Uterus (tissue), 4 donors: ENCODE measurements at regions of chr1 and their contacts with region 1.

Region 1: DNA sequence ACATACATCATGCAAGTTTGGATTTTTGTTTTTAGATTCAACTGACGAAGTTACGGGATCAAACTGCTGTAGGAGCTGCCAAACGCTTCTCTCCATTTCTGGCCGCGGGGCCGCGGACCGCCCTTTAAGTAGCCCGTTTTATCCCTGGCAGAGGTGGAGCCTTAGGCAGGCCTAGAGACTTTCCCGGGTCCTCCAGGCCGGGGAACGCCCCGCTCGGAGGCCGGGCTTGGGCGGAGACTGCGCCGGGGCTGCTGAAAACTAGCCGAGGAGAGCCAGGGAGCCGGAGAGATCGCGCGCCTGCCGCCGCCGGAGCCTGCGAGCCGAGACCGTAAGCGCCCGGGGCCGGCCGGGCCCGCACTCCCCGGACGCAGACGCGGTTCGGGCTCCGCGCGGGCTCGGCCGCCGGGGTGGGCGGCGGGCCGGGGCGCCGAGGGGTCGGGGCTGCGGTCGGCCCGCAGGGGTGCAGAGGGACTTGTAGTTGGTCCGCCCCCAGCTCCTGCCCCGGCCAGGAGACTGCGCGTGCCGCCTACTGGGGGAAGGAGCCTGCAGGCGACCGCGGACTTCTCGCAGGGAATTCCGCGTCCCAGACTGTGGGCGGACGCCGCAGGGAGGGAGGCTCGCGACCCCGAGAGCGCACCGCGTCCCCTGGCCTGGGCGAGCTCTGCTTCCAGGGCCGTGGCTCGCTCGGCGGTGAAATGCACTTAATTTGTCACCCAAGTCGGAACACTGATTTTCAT is at the start of gene EPHX1:
- DNase-seq: peak; percentile 89 to 92
- H3K4me3 ChIP-seq: peak within 1 kb of the TSS; percentile 75 to 76
- H3K27ac ChIP-seq: peak within 1 kb of the TSS; percentile 94 to 99
- H3K4me1 ChIP-seq: peaks cover 23 to 28% of the 10 kb centered on the region in 2 donors
- H3K27me3 ChIP-seq: no peaks in the 10 kb centered on the region
- CTCF ChIP-seq: peak in 3 of 4 experiments; percentile 7 to 59 (median 52)
- POLR2A ChIP-seq: peak; percentile 93 to 95
- total RNA-seq, gene EPHX1: 51.2 to 156 (median 55.3) TPM

Region 2: DNA sequence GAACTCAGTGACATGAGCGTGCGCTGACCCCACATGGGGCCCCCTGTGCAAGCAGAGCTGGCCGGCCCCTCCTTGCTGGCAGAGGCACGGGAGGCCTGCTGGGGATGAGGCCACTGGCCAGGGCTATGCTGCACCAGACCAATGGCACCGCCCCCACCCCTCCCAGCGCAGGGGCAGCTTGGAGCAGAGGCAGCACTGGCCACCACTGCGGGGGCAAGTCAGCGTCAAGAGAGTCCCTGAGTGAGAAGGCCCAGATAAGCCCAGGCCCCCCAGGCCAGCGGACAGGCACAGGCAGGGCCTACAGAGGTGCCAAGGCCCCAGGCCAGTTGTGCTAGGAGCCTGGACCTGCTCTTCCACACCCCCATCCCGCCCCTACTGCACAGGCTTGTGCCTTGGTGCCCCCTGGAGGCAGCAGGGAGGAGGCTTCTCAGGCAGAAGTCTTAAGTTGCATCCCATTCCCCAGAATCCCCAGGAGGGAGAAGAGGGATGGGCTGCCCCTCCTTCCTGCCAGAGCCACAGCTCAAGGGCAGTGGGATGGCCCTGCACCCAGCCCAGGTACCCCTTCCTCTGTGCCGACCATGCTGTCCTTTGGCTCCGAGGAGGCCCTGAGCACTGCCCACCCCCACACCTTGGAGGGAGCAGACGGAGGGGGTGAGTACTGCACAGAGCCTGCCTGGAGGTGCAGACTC is 35.7 kb after region 1 on chr1:
- intact Hi-C with region 1: loop called (anchors 5 kb)
- DNase-seq: peak; percentile 81 to 86
- H3K4me3 ChIP-seq: no peak overlapping the region
- H3K27ac ChIP-seq: peak overlapping the region; percentile 51 to 72
- H3K4me1 ChIP-seq: peaks cover 0 to 4% of the 10 kb centered on the region in 2 donors
- H3K27me3 ChIP-seq: no peaks in the 10 kb centered on the region
- CTCF ChIP-seq: peak; percentile 77 to 85 (median 84)
- POLR2A ChIP-seq: no peak

Region 3: GRCh38 chr1:225973158-225973557 is 163.1 kb after region 1 on chr1:
- intact Hi-C with region 1: no loop called
- DNase-seq: no peak
- H3K4me3 ChIP-seq: no peak overlapping the region
- H3K27ac ChIP-seq: no peak overlapping the region
- H3K4me1 ChIP-seq: no peaks in the 10 kb centered on the region
- H3K27me3 ChIP-seq: no peaks in the 10 kb centered on the region
- CTCF ChIP-seq: no peak
- POLR2A ChIP-seq: no peak

Region 4: GRCh38 chr1:226308723-226309315 is 498.8 kb after region 1 on chr1 and contains the start of gene LIN9:
- intact Hi-C with region 1: no loop called
- DNase-seq: peak; percentile 87
- H3K4me3 ChIP-seq: peak within 1 kb of the TSS; percentile 64 to 96
- H3K27ac ChIP-seq: peak within 1 kb of the TSS; percentile 72 to 75
- H3K4me1 ChIP-seq: no peaks in the 10 kb centered on the region
- H3K27me3 ChIP-seq: no peaks in the 10 kb centered on the region
- CTCF ChIP-seq: no peak
- POLR2A ChIP-seq: peak in 1 of 2 donors; percentile 34
- total RNA-seq, gene LIN9: 0.59 to 15.1 (median 3.9) TPM